Right ventricle myocardium superior (tissue), 1 donor: ENCODE measurements at regions of chr6 and their contacts with region 1.

Region 1: GRCh38 chr6:46410334-46410953 is 80.8 kb downstream of the RCAN2 start:
- DNase-seq: no peak
- ATAC-seq: peak; percentile 64

Region 2: DNA sequence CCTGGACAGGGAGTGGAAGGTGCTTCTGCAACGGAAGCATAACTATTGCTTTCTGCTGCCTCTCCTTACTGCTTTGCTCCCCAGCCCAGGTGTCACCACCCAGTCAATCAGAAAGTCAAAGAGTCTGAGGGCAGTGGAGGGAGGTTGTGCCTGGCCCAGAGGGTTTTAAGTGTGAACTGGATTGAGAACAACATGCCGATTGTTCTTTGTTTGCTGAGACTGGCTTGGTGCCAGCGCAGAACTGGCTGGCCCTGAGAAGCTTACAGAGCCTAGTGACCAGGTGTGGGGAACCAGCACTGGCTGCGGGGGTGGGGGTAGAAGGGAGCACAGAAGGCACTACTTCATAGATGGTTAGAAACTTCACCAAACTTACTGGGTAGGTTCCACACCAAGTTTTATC is 311.8 kb before region 1 on chr6:
- intact Hi-C with region 1: loop called (anchors 5 kb)
- DNase-seq: peak; percentile 45
- ATAC-seq: peak; percentile 46

Region 3: DNA sequence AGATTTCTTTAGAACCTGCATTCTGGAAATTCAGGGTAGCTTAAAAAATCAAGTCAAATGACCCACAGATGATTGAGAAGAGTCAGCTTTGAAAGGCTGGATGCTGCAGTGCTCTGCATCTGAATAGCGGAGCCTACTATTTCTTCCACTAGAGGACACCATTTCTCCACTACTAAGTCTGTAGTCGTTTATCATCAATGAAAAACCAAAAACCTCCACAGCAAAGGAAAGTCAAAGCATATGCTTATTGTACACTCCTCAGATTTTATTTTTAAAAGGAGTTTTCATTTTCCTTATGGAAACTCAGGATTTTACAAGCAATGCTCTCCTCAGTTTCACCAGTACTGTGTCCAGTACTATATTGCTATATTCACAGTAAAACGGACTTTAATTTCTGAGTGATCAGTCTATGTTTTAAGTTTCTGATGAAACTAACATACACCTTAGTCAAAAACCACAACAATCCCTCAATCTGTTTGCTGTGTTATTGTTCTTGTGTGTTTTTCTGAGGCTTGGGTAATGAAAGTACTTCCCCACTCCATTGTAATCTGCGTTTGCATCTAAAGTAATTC is 189.1 kb before region 1 on chr6:
- intact Hi-C with region 1: loop called (anchors 2 kb)
- DNase-seq: no peak
- ATAC-seq: peak; percentile 65